ENCODE measurements at regions of chr5 and their contacts with region 1.

Region 1: DNA sequence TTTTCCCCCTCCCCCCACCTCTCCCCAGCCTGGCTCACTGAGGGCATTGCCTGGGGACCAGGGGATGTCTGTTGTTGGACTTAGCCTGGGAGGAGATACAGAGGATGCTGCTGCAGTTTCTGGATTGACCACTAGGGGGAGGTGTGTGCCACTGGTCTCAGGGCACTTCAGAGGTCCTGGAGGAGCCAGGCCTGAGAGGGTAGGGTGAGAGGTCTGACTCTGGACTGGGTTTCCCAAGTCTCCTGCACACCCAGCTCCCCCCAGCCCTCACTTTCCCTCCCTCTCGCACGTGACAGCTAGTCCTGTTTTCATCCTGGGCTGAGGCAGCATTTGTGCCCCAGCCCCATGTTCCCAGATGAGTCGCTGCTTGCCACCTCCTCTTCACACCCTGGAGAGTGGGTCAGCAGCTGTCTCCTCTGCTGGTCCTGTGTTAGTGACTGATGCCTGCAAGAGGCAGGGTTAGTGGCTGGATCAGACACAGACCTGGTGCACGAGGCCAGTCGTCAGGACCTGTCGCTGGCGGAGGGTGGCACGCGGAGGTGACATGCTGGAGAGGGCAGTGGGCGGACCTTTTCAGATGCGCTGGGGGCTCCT is 4.4 kb downstream of the IL3 start:
- DNase-seq: peak; percentile 81 to 88 (median 83)
- ATAC-seq: peak; percentile 91
- H3K4me3 ChIP-seq: no peak overlapping the region
- H3K27ac ChIP-seq: no peak overlapping the region
- H3K4me1 ChIP-seq: peaks cover 8 to 26% of the 10 kb centered on the region in 2 experiments; a peak in 4 of 5 replicates
- H3K27me3 ChIP-seq: no peaks in the 10 kb centered on the region
- CTCF ChIP-seq: peak; percentile 91 to 95 (median 94)
- EP300 ChIP-seq: no peak
- POLR2A ChIP-seq: no peak
- RAD21 ChIP-seq: peak; percentile 60 to 85

Region 2: GRCh38 chr5:131423056-131423455 is 641.8 kb before region 1 on chr5:
- CTCF ChIA-PET with region 1: interaction called, 15 read pairs
- POLR2A ChIA-PET with region 1: no interaction called
- in situ Hi-C with region 1: no loop called
- intact Hi-C with region 1: loop called (anchors 1 kb)
- DNase-seq: peak in 2 of 4 experiments; percentile 20 to 38
- ATAC-seq: peak; percentile 82
- H3K4me3 ChIP-seq: no peak overlapping the region
- H3K27ac ChIP-seq: no peak overlapping the region
- H3K4me1 ChIP-seq: no peaks in the 10 kb centered on the region
- H3K27me3 ChIP-seq: no peaks in the 10 kb centered on the region
- CTCF ChIP-seq: peak; percentile 44 to 67 (median 64); a peak in 5 of 6 replicates
- EP300 ChIP-seq: no peak
- POLR2A ChIP-seq: no peak
- RAD21 ChIP-seq: peak; percentile 8 to 71; a peak in 2 of 4 replicates

Region 3: DNA sequence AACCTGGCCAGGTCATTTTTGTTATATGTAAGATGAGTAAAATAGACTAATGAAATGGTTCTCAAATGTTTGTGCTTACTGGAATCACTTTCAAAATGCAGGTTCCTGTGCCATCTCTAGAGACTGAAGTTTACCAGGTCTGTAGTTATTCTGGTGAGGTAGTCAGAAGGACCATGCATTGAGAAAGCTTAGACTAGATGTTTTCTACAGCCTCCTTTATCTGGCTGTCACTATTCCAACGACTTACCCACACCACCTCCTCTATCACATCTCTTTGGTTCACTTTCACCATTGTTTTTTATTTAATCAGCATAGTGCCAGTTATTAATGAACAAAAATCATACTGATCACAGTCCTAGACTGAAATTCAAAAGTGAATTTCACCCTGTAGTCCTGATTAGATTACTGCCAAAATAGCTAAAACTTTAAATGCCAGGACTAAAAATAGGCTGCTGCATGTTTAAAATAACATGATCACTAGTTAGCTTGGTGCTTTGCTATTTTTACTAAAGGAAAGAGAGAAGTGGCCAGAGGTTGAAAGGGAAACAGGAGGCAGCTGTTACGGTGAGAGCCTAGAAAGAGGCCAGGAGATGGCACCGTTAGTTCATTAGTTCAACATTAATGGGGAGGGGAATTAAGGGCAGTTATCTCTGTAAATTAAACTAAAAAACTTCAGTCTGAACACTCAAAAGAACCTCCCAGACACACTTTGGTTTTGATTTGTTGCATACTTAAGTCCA is 254.2 kb before region 1 on chr5:
- CTCF ChIA-PET with region 1: no interaction called
- POLR2A ChIA-PET with region 1: interaction called, 3 read pairs
- in situ Hi-C with region 1: no loop called
- intact Hi-C with region 1: loop called (anchors 1 kb)
- DNase-seq: peak in 2 of 4 experiments; percentile 25 to 33
- ATAC-seq: peak; percentile 71
- H3K4me3 ChIP-seq: no peak overlapping the region
- H3K27ac ChIP-seq: no peak overlapping the region
- H3K4me1 ChIP-seq: peaks cover 2 to 18% of the 10 kb centered on the region in 2 experiments; a peak in 2 of 5 replicates
- H3K27me3 ChIP-seq: no peaks in the 10 kb centered on the region
- CTCF ChIP-seq: peak; percentile 28 to 54 (median 34); a peak in 4 of 6 replicates
- EP300 ChIP-seq: no peak
- POLR2A ChIP-seq: no peak
- RAD21 ChIP-seq: peak; percentile 72 to 85

Region 4: GRCh38 chr5:132180134-132180745 is 115.4 kb after region 1 on chr5:
- CTCF ChIA-PET with region 1: interaction called, 18 read pairs
- POLR2A ChIA-PET with region 1: no interaction called
- in situ Hi-C with region 1: loop called (anchors 5 kb)
- intact Hi-C with region 1: loop called (anchors 1 kb)
- DNase-seq: peak; percentile 46 to 87 (median 60)
- ATAC-seq: peak; percentile 64
- H3K4me3 ChIP-seq: peak overlapping the region; percentile 56
- H3K27ac ChIP-seq: peak overlapping the region; percentile 82
- H3K4me1 ChIP-seq: peaks cover 16 to 37% of the 10 kb centered on the region in 2 experiments
- H3K27me3 ChIP-seq: no peaks in the 10 kb centered on the region
- CTCF ChIP-seq: peak; percentile 81 to 94 (median 88)
- EP300 ChIP-seq: peak; percentile 46
- POLR2A ChIP-seq: no peak
- RAD21 ChIP-seq: peak; percentile 66 to 72

Region 5: GRCh38 chr5:132315529-132316083 is 250.8 kb after region 1 on chr5:
- CTCF ChIA-PET with region 1: interaction called, 25 read pairs
- POLR2A ChIA-PET with region 1: no interaction called
- in situ Hi-C with region 1: loop called (anchors 5 kb)
- intact Hi-C with region 1: loop called (anchors 1 kb)
- DNase-seq: peak; percentile 93 to 96 (median 95)
- ATAC-seq: peak; percentile 82
- H3K4me3 ChIP-seq: no peak overlapping the region
- H3K27ac ChIP-seq: peak overlapping the region; percentile 75
- H3K4me1 ChIP-seq: peaks cover 70 to 73% of the 10 kb centered on the region in 2 experiments
- H3K27me3 ChIP-seq: no peaks in the 10 kb centered on the region
- CTCF ChIP-seq: peak; percentile 54 to 79 (median 69)
- EP300 ChIP-seq: peak; percentile 93
- POLR2A ChIP-seq: no peak
- RAD21 ChIP-seq: peak; percentile 68 to 91

Region 6: DNA sequence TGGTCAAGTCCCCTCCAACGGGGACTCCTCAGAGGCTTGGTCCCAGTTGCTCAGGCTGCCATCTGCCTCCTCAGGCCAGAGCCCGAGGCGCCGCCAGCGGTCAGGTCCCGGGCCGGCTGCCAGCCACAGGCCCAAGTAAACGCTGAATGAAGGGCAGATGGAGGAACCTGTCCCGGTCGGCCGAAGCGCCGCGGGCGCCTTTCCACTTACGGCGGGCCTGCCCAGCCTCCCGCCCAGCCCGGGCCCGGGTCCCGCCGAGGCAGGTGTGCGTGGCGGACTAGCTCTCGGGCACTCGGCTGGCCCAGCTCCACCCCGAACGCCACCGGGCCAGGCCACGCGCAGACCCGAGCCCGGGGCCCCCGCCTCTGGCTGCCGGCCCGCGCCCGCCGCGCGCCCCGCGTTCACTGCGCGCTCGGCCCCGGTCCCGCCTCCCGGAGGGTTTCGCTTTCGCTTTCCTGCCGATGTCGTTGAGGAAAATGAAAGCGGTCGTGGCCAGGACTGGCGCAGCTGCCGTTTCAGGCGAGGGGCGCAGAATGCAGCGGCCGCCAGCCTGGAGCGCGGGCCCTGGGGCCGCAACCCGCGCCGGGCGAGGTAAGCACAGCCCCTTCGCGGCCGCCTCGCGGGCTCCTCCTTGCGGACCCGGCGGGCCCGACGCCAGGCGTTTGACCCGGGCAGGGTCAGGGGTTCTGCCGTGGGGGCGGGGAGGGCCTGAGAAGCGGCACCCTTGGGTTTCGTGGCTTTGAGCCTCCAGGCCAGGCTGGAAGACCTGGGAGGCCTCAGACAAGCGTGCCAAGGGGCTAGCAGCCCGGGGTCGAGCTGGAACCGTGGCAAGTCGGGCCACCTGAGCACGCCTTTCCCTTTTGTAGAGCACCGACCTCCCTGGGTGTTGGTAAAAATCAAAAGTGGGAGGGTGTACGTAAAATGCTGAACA is 345.9 kb after region 1 on chr5:
- CTCF ChIA-PET with region 1: interaction called, 3 read pairs
- POLR2A ChIA-PET with region 1: no interaction called
- in situ Hi-C with region 1: no loop called
- intact Hi-C with region 1: loop called (anchors 2 kb)
- DNase-seq: peak; percentile 88 to 91 (median 90)
- ATAC-seq: peak; percentile 99
- H3K4me3 ChIP-seq: peak overlapping the region; percentile 60
- H3K27ac ChIP-seq: peak overlapping the region; percentile 81
- H3K4me1 ChIP-seq: peaks cover 17% of the 10 kb centered on the region in 2 experiments; a peak in 4 of 5 replicates
- H3K27me3 ChIP-seq: no peaks in the 10 kb centered on the region
- CTCF ChIP-seq: peak; percentile 81 to 93 (median 85)
- EP300 ChIP-seq: peak; percentile 12; the same call in 1 of the 2 replicates
- POLR2A ChIP-seq: peak; percentile 72
- RAD21 ChIP-seq: peak; percentile 83 to 88

Region 7: GRCh38 chr5:132500931-132501630 is 436.2 kb after region 1 on chr5:
- CTCF ChIA-PET with region 1: interaction called, 20 read pairs
- POLR2A ChIA-PET with region 1: no interaction called
- in situ Hi-C with region 1: loop called (anchors 5 kb)
- intact Hi-C with region 1: loop called (anchors 1 kb)
- DNase-seq: peak; percentile 85 to 94 (median 91)
- ATAC-seq: peak; percentile 70
- H3K4me3 ChIP-seq: no peak overlapping the region
- H3K27ac ChIP-seq: no peak overlapping the region
- H3K4me1 ChIP-seq: peaks cover 26 to 41% of the 10 kb centered on the region in 2 experiments; a peak in 4 of 5 replicates
- H3K27me3 ChIP-seq: no peaks in the 10 kb centered on the region
- CTCF ChIP-seq: peak; percentile 91 to 94 (median 93)
- EP300 ChIP-seq: peak; percentile 26; the same call in 1 of the 2 replicates
- POLR2A ChIP-seq: no peak
- RAD21 ChIP-seq: peak; percentile 98 to 99

Measured in K562 (cell line).